Lower leg skin (tissue), 4 donors: ENCODE measurements at regions of chr20 and their contacts with region 1.

Region 1: DNA sequence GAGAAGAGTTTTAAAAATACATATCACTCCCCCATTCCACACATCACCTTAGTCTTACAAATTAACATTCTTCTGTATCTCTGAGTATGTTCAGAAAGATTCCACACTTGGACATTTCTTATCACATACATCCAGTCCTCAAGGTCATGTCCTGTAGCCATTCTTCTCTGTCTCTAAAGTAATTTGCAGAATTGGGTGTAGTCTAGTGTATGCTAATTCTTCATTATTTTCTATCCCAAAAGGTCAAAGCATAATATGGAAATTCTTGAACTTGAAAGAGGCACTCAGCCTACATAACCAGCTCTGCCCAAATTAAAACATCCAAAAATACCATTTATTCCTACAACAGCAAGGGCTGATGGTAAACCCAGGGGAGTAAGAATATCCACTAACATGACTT is 286.0 kb downstream of the HAO1 start:
- DNase-seq: no peak
- H3K4me3 ChIP-seq: no peak overlapping the region
- CTCF ChIP-seq: no peak
- POLR2A ChIP-seq: no peak

Region 2: DNA sequence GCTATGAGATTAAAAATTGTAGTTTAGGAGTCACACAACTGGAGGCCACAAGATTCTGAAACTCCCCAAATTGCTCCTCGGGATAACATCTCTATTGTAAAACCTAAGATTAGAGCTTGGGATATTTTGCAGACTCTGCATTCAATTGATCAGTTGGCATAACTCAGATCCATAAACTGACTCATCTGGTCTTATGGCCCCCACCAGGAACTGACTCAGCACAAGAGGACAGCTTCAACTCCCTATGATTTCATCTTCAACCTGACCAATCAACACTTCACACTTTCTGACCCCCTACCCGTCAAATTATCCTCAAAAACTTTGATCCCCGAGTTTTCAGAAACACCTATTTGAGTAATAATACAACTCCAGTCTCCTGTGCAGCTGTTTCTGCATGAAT is 28.7 kb after region 1 on chr20:
- intact Hi-C with region 1: loop called (anchors 2 kb)
- DNase-seq: no peak
- H3K4me3 ChIP-seq: no peak overlapping the region
- CTCF ChIP-seq: no peak
- POLR2A ChIP-seq: no peak

Region 3: DNA sequence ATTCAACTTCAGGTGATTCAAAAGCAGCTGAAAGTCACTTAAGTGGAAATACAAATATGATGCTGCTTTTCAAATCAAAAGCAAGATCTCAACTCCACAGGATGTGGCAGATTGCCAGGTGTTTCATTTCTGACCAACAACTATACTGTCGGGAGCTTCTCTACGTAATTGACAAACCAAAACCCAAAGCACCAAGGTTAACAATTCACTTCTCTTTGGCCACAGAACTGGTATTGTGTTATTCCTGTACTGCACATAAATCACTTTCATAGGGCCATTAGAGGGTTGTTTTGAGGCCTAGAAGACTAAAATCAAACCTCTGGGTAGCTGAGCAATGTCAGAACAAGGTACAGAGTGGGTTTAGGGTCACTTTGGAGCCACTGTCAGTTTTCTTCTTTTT is 116.3 kb after region 1 on chr20:
- intact Hi-C with region 1: no loop called
- DNase-seq: no peak
- H3K4me3 ChIP-seq: no peak overlapping the region
- CTCF ChIP-seq: no peak
- POLR2A ChIP-seq: no peak